PC-9 (cell line): ENCODE measurements at regions of chr3 and their contacts with region 1.

Region 1: GRCh38 chr3:156674046-156674910 is at the start of gene TIPARP:
- DNase-seq: peak; percentile 95 to 100
- H3K4me3 ChIP-seq: peak within 1 kb of the TSS; percentile 70
- H3K27ac ChIP-seq: peak within 1 kb of the TSS; percentile 85
- H3K4me1 ChIP-seq: peaks cover 44% of the 10 kb centered on the region
- H3K27me3 ChIP-seq: no peaks in the 10 kb centered on the region
- CTCF ChIP-seq: peak; percentile 88
- total RNA-seq, gene TIPARP: 30.3 and 35.0 TPM in 2 replicates

Region 2: DNA sequence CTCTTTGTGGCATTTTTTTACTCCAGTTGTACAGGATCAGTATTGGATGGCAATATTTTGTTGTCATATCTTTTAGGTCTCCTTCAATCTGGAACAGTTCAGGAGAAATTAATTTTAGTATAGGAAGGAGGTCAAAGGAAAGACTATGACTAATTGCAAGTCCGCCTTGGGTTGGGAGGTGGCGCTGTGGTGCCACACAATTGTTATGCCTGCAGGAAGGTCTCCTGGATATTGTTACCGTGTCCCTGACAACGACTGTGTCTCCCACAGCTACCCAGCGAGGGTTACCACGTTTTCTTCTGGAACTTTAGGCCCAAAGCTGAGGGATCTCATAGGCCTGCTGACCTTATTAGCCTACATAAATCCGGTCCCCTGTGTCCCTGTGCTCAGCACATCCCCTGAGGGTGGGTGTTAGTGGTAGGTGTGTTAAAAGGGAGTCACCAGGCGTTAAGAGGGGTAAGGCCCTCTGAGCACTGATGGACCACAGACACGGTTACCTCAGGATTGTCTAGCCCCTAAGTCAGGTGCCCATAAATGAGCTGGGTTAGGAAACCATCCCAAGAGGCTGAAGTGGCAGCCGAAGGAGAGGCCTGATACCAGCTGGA is 522.4 kb before region 1 on chr3:
- CTCF ChIA-PET with region 1: no interaction called
- POLR2A ChIA-PET with region 1: no interaction called
- intact Hi-C with region 1: loop called (anchors 1 kb)
- DNase-seq: peak; percentile 49 to 62
- H3K4me3 ChIP-seq: no peak overlapping the region
- H3K27ac ChIP-seq: no peak overlapping the region
- H3K4me1 ChIP-seq: no peaks in the 10 kb centered on the region
- H3K27me3 ChIP-seq: no peaks in the 10 kb centered on the region
- CTCF ChIP-seq: peak; percentile 92

Region 3: GRCh38 chr3:156535162-156535627 is 139.1 kb before region 1 on chr3:
- CTCF ChIA-PET with region 1: interaction called, 4 read pairs
- POLR2A ChIA-PET with region 1: no interaction called
- intact Hi-C with region 1: loop called (anchors 1 kb)
- DNase-seq: peak; percentile 70 to 98
- H3K4me3 ChIP-seq: no peak overlapping the region
- H3K27ac ChIP-seq: peak overlapping the region; percentile 72
- H3K4me1 ChIP-seq: peaks cover 21% of the 10 kb centered on the region
- H3K27me3 ChIP-seq: no peaks in the 10 kb centered on the region
- CTCF ChIP-seq: peak; percentile 59

Region 4: GRCh38 chr3:156576651-156577343 is 97.5 kb before region 1 on chr3:
- CTCF ChIA-PET with region 1: no interaction called
- POLR2A ChIA-PET with region 1: no interaction called
- intact Hi-C with region 1: loop called (anchors 1 kb)
- DNase-seq: no peak
- H3K4me3 ChIP-seq: no peak overlapping the region
- H3K27ac ChIP-seq: no peak overlapping the region
- H3K4me1 ChIP-seq: no peaks in the 10 kb centered on the region
- H3K27me3 ChIP-seq: no peaks in the 10 kb centered on the region
- CTCF ChIP-seq: no peak

Region 5: DNA sequence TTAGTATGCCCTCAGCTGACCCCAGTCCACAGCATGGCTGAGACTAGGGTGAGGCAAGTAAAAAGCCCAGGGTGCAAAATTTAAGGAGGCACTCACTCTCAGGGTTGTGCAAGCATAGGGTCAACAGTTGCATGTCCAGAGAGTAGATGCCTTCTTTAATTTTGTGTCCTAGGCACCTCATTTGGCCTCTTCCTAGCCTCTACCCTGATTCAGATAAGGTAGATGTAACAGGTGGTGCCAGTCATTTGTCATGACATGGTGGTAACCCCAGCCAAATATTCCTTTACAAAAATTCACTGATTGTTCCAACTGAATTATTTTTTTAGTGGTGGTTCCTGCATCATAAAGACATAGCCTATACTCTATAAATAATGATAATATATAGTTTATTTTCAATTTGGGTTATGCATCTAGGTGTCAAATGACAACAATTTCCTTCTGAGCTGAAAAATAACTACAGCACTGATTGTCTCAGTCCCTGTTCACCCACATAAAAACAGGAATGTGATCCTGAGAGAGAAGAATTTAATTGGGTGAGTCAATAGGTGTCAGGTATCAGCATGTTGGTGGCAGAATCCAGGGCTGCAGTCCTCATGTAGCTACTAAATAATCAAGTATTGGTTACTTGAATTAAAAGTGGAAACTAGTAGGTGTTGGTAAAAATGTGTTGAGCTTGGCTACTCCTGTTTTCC is 44.1 kb before region 1 on chr3:
- CTCF ChIA-PET with region 1: interaction called, 5 read pairs
- POLR2A ChIA-PET with region 1: no interaction called
- intact Hi-C with region 1: loop called (anchors 1 kb)
- DNase-seq: peak; percentile 53 to 93
- H3K4me3 ChIP-seq: no peak overlapping the region
- H3K27ac ChIP-seq: peak overlapping the region; percentile 84
- H3K4me1 ChIP-seq: peaks cover 67% of the 10 kb centered on the region
- H3K27me3 ChIP-seq: no peaks in the 10 kb centered on the region
- CTCF ChIP-seq: no peak

Region 6: DNA sequence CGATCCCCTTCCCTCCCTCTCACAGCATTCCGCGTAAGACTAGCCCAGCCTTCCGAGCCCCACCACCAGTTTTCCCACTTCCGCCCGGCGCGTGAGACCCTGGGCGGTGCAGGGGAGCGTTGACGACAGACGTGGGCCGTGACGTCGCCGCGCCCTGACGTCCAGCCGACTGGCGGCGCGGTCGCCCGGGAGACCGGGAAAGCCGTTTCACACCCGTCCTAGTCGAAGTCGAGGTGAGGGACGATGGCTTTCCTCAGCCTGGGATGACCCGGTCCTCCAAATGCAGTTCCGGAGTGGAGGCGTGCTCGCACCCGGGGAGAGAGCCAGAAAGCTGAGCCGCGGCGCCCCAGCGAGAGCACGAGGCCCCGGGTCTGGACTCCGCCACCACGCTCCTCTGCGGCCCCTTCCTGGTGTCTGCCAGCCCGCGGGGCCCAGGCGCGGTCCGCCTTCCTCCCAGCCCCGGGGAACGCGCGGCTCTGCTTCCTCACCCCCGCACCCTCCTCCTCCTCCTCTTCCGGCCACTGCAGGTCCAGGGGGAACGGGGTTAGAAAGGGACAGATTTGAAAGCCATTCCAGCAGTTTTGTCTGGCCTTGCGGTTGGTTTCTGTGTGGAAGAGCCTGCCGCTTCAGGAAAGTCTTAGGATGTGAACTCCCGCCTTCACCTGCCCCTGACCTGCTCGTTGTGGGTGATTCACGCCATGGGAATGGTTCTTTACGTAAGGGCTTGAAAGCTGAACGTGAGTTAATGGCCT is 152.0 kb after region 1 on chr3 and contains the start of gene LEKR1:
- CTCF ChIA-PET with region 1: no interaction called
- POLR2A ChIA-PET with region 1: no interaction called
- intact Hi-C with region 1: loop called (anchors 1 kb)
- DNase-seq: peak; percentile 91 to 98
- H3K4me3 ChIP-seq: peak within 1 kb of the TSS; percentile 63
- H3K27ac ChIP-seq: peak within 1 kb of the TSS; percentile 100
- H3K4me1 ChIP-seq: peaks cover 26% of the 10 kb centered on the region
- H3K27me3 ChIP-seq: no peaks in the 10 kb centered on the region
- CTCF ChIP-seq: no peak; the same call in 1 of the 2 replicates
- total RNA-seq, gene LEKR1: 3.2 and 3.9 TPM in 2 replicates

Region 7: DNA sequence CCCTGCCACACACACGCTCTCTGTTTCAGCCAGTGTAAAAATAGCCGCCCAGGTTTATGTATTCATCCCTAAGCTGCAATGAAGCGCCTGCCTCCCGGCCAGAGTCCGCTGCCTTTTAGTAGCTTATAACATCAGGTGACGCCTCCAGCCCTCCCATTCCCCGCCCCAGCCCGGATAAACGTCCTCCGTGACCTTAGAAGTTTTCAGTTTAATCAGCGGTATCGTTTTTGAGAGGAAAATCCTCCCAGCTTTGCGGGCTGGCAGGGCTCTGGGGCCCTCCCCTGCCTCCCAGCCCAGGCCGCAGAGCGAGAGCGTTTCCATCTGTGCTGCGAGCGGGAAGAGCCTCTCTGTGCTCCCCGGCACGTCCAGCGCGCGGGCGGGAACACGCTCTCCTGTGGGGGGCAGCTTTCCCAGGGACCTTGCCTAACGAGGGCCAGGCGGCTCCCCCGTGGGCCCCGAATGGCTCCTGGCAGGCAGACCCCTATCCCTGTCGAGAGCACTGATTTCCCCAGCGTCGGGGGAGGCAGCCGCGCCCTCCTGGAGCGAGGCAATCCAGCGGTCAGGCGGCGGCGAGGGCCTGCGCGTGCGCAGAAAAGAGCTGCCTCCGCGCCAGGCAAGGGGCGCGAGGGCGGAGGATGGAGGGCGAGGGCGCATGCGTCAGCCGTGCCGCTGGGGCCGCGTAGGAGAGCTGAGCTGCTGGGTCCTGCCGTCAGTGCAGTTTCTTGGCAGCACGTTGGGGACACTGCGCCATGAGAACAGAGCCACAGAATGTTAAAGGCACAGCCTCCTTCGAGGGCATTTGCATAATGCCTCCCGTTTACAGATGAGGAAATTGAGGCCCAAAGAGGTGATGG is 414.6 kb after region 1 on chr3:
- CTCF ChIA-PET with region 1: interaction called, 7 read pairs
- POLR2A ChIA-PET with region 1: interaction called, 11 read pairs
- intact Hi-C with region 1: loop called (anchors 1 kb)
- DNase-seq: peak; percentile 90 to 97
- H3K4me3 ChIP-seq: peak overlapping the region; percentile 62
- H3K27ac ChIP-seq: peak overlapping the region; percentile 99
- H3K4me1 ChIP-seq: peaks cover 46% of the 10 kb centered on the region
- H3K27me3 ChIP-seq: no peaks in the 10 kb centered on the region
- CTCF ChIP-seq: no peak